Endothelial cell of umbilical vein (primary cell): ENCODE measurements at regions of chr7 and their contacts with region 1.

Region 1: DNA sequence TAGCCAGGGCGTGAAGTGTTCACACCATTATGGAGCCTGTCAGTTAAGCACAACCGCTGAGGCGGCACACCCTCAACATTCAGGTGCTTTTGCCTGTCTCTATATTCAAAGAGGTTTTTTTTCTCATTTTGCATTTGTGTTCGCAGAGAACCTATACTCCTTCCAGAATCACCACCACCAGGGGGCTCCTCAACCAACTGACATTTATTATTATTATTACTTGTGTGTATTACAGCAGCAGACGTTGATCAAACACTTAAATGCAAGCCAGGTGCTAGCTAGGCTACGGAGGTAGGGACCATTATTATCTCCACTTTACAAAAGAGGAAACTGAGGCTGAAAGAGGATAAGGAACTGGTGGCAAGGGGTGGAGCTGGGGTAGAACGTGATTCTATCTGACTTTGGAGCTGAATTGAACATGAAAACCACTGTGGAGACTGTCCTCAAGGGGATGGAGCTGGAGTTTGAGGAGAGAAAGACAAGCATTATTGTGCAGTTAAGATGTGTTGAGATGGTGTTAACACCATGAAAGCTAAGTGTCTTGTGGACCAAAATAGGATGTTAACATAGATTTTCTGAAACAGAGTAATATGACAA is 133.8 kb upstream of the PLXNA4 start:
- DNase-seq: peak; percentile 59
- H3K4me3 ChIP-seq: no peak overlapping the region
- H3K27ac ChIP-seq: no peak overlapping the region
- H3K4me1 ChIP-seq: no peaks in the 10 kb centered on the region
- H3K27me3 ChIP-seq: peaks cover 0 to 2% of the 10 kb centered on the region in 2 experiments
- CTCF ChIP-seq: peak; percentile 53
- POLR2A ChIP-seq: no peak

Region 2: GRCh38 chr7:133139350-133139749 is 429.3 kb after region 1 on chr7:
- CTCF ChIA-PET with region 1: interaction called, 3 read pairs
- POLR2A ChIA-PET with region 1: no interaction called
- dilution Hi-C with region 1: no loop called
- intact Hi-C with region 1: loop called (anchors 10 kb)
- DNase-seq: peak; percentile 32
- H3K4me3 ChIP-seq: no peak overlapping the region
- H3K27ac ChIP-seq: no peak overlapping the region
- H3K4me1 ChIP-seq: no peaks in the 10 kb centered on the region
- H3K27me3 ChIP-seq: peaks cover 0 to 1% of the 10 kb centered on the region in 2 experiments
- CTCF ChIP-seq: peak; percentile 15 to 37
- POLR2A ChIP-seq: no peak

Region 3: GRCh38 chr7:134016223-134016941 is 1306.3 kb after region 1 on chr7:
- CTCF ChIA-PET with region 1: interaction called, 6 read pairs
- POLR2A ChIA-PET with region 1: no interaction called
- dilution Hi-C with region 1: no loop called
- intact Hi-C with region 1: loop called (anchors 10 kb)
- DNase-seq: peak; percentile 57
- H3K4me3 ChIP-seq: no peak overlapping the region
- H3K27ac ChIP-seq: no peak overlapping the region
- H3K4me1 ChIP-seq: no peaks in the 10 kb centered on the region
- H3K27me3 ChIP-seq: no peaks in the 10 kb centered on the region
- CTCF ChIP-seq: peak; percentile 59 to 76
- POLR2A ChIP-seq: no peak